ENCODE measurements at regions of chrX and their contacts with region 1.

Region 1: GRCh38 chrX:130110379-130111219 is at the start of gene ELF4:
- DNase-seq: peak; percentile 71
- ATAC-seq: peak; percentile 64
- H3K4me3 ChIP-seq: peak within 1 kb of the TSS; percentile 47 to 72 (median 67)
- H3K4me3 Mint-ChIP-seq: peak within 1 kb of the TSS; percentile 94
- H3K27ac ChIP-seq: peak within 1 kb of the TSS; percentile 54 to 86
- H3K27ac Mint-ChIP-seq: peak within 1 kb of the TSS; percentile 93
- H3K4me1 ChIP-seq: peaks cover 13 to 19% of the 10 kb centered on the region in 2 donors
- H3K4me1 Mint-ChIP-seq: peaks cover 29% of the 10 kb centered on the region
- H3K27me3 ChIP-seq: no peaks in the 10 kb centered on the region
- H3K27me3 Mint-ChIP-seq: no peaks in the 10 kb centered on the region
- CTCF ChIP-seq: no peak
- total RNA-seq, gene ELF4: 26.3 and 26.5 TPM in 2 replicates

Region 2: DNA sequence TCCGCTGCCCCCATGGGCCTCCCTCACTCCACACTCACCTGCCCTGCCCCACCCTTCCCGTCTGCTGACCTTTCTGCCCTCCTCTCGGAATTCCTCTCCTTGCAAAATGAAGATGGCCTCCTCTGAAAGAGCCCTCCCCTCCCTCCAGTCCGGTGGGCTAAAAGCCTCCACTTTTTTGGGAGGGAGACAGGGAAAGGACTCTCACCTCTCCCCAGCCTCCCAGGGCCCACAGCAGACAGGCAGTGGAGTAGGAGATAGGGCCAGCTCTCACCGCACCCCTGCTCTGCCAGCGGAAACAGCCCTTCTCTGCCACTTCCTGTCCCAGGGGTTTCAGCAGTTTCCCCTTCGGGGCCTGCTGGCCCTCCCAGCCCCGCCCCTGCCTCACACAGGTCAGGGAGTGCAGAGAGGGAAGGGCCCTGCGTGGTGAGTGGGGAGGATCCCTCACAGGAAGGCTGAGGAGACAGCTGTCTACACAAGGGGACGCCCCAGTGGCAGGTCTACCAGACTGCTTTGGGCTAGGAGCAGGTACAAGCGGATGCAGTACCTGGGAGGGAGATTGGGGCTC is 18.6 kb before region 1 on chrX:
- CTCF ChIA-PET with region 1: interaction called, 6 read pairs
- POLR2A ChIA-PET with region 1: interaction called, 4 read pairs
- intact Hi-C with region 1: loop called (anchors 1 kb)
- DNase-seq: peak; percentile 92
- ATAC-seq: peak; percentile 96
- H3K4me3 ChIP-seq: peak overlapping the region; percentile 1 to 64 (median 49)
- H3K4me3 Mint-ChIP-seq: peak overlapping the region; percentile 88
- H3K27ac ChIP-seq: peak overlapping the region; percentile 75 to 81
- H3K27ac Mint-ChIP-seq: peak overlapping the region; percentile 95
- H3K4me1 ChIP-seq: peaks cover 44 to 70% of the 10 kb centered on the region in 2 donors
- H3K4me1 Mint-ChIP-seq: peaks cover 55% of the 10 kb centered on the region
- H3K27me3 ChIP-seq: no peaks in the 10 kb centered on the region
- H3K27me3 Mint-ChIP-seq: no peaks in the 10 kb centered on the region
- CTCF ChIP-seq: peak; percentile 14

Region 3: GRCh38 chrX:130299279-130300009 is 188.8 kb after region 1 on chrX:
- CTCF ChIA-PET with region 1: no interaction called
- POLR2A ChIA-PET with region 1: no interaction called
- intact Hi-C with region 1: no loop called
- DNase-seq: no peak
- ATAC-seq: no peak
- H3K4me3 ChIP-seq: no peak overlapping the region
- H3K4me3 Mint-ChIP-seq: no peak overlapping the region
- H3K27ac ChIP-seq: no peak overlapping the region
- H3K27ac Mint-ChIP-seq: no peak overlapping the region
- H3K4me1 ChIP-seq: no peaks in the 10 kb centered on the region
- H3K4me1 Mint-ChIP-seq: no peaks in the 10 kb centered on the region
- H3K27me3 ChIP-seq: no peaks in the 10 kb centered on the region
- H3K27me3 Mint-ChIP-seq: peaks cover 2% of the 10 kb centered on the region
- CTCF ChIP-seq: no peak

Measured in B cell (primary cell).